ENCODE measurements at regions of chr9 and their contacts with region 1.

Region 1: DNA sequence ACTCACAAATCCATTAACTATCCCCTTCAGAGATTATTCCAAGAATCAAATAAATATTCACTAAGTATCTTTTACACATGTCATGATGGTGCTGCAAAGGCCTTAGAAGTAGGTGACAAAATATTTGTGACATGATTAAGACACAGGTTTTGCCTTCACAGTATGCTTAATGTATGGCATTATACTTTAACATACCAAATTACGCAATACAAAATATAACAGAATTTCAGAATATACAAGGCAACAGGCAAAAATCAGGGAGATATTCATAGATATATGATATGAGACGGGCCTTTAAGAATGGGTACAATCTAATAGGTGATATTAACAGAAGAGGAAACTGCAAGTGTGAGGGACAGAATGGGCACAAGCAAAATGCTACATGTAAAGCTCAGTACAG is 41.6 kb downstream of the CAAP1 start:
- DNase-seq: no peak
- H3K4me3 ChIP-seq: no peak overlapping the region
- H3K27ac ChIP-seq: no peak overlapping the region
- H3K4me1 ChIP-seq: no peaks in the 10 kb centered on the region
- CTCF ChIP-seq: no peak

Region 2: GRCh38 chr9:26567976-26568375 is 283.0 kb before region 1 on chr9:
- CTCF ChIA-PET with region 1: no interaction called
- POLR2A ChIA-PET with region 1: no interaction called
- intact Hi-C with region 1: no loop called
- DNase-seq: no peak
- H3K4me3 ChIP-seq: no peak overlapping the region
- H3K27ac ChIP-seq: no peak overlapping the region
- H3K4me1 ChIP-seq: no peaks in the 10 kb centered on the region
- CTCF ChIP-seq: no peak

Region 3: GRCh38 chr9:26870292-26870691 is 19.3 kb after region 1 on chr9:
- CTCF ChIA-PET with region 1: no interaction called
- POLR2A ChIA-PET with region 1: no interaction called
- intact Hi-C with region 1: no loop called
- DNase-seq: no peak
- H3K4me3 ChIP-seq: no peak overlapping the region
- H3K27ac ChIP-seq: no peak overlapping the region
- H3K4me1 ChIP-seq: no peaks in the 10 kb centered on the region
- CTCF ChIP-seq: no peak

Region 4: GRCh38 chr9:27504259-27504658 is 653.3 kb after region 1 on chr9:
- CTCF ChIA-PET with region 1: no interaction called
- POLR2A ChIA-PET with region 1: no interaction called
- intact Hi-C with region 1: loop called (anchors 5 kb)
- DNase-seq: no peak
- H3K4me3 ChIP-seq: no peak overlapping the region
- H3K27ac ChIP-seq: no peak overlapping the region
- H3K4me1 ChIP-seq: no peaks in the 10 kb centered on the region
- CTCF ChIP-seq: no peak